T-cell (primary cell): ENCODE measurements at regions of chr3 and their contacts with region 1.

Region 1: GRCh38 chr3:118955914-118956556 is 78.6 kb downstream of the IGSF11 start:
- DNase-seq: peak in 4 of 35 experiments; percentile 3 to 52 (median 3)
- ATAC-seq: peak; percentile 93 to 96 (median 96)
- H3K4me3 ChIP-seq: no peak overlapping the region
- H3K4me3 Mint-ChIP-seq: peak overlapping the region; percentile 1 to 59 (median 28)
- H3K27ac ChIP-seq: peak overlapping the region; percentile 59
- H3K27ac Mint-ChIP-seq: peak overlapping the region; percentile 83 to 86
- H3K4me1 ChIP-seq: peaks cover 9 to 36% of the 10 kb centered on the region in 2 experiments
- H3K4me1 Mint-ChIP-seq: peaks cover 42 to 50% (median 47%) of the 10 kb centered on the region in 3 donors
- H3K27me3 ChIP-seq: no peaks in the 10 kb centered on the region
- H3K27me3 Mint-ChIP-seq: no peaks in the 10 kb centered on the region

Region 2: DNA sequence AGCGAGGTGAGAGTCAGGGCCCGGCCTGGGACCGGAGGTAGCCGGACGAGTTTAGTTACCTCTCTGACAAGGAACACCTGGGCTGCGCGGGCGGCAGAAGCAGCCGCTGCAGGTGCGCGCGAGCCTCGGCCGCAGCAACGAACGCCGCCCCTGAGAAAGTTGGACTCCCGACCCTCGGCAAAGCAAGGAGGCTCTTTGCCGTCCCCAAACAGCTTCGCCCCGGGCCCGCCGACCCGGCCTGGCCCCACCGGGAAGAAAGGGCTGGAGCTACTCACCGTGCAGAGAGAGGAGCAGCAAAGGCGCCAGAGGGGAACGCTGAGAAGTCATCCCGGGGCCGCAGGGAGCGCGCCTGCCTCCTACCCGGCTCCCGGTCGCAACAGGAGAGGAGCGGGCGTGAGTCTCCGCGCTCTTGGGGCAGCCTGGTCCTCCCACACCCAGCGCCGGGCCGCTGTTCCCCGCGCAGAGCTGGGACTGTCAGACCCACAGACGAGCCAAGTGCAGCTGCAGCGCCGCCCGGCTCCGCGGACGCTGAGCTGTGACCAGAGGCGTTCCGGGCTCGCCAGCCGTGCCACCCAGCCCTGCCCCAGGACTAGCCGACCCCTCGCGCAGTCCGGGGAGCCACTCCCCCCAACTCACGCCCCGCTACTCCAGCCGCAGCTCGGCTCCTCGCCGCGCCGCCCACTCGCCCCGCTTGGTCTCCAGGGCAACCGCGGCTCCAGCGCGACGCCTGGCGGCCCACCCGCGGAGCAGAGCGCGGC is 78.4 kb after region 1 on chr3 and contains the start of gene IGSF11:
- CTCF ChIA-PET with region 1: interaction called in 1 of 2 experiments, 10 read pairs
- POLR2A ChIA-PET with region 1: no interaction called
- DNase-seq: peak; percentile 11 to 75 (median 50)
- ATAC-seq: peak; percentile 92 to 95 (median 93)
- H3K4me3 ChIP-seq: peak within 1 kb of the TSS; percentile 62 to 90
- H3K4me3 Mint-ChIP-seq: peak within 1 kb of the TSS; percentile 86 to 90 (median 87)
- H3K27ac ChIP-seq: no peak within 1 kb of the TSS
- H3K27ac Mint-ChIP-seq: no peak within 1 kb of the TSS
- H3K4me1 ChIP-seq: peaks cover 2 to 9% of the 10 kb centered on the region in 2 experiments
- H3K4me1 Mint-ChIP-seq: peaks cover 8 to 14% (median 14%) of the 10 kb centered on the region in 3 donors
- H3K27me3 ChIP-seq: peaks cover 6 to 21% of the 10 kb centered on the region in 2 experiments
- H3K27me3 Mint-ChIP-seq: peaks cover 38 to 45% of the 10 kb centered on the region in 2 donors
- total RNA-seq, gene IGSF11: 0.20 to 0.70 (median 0.41) TPM